ENCODE measurements at regions of chr2 and their contacts with region 1.

Region 1: DNA sequence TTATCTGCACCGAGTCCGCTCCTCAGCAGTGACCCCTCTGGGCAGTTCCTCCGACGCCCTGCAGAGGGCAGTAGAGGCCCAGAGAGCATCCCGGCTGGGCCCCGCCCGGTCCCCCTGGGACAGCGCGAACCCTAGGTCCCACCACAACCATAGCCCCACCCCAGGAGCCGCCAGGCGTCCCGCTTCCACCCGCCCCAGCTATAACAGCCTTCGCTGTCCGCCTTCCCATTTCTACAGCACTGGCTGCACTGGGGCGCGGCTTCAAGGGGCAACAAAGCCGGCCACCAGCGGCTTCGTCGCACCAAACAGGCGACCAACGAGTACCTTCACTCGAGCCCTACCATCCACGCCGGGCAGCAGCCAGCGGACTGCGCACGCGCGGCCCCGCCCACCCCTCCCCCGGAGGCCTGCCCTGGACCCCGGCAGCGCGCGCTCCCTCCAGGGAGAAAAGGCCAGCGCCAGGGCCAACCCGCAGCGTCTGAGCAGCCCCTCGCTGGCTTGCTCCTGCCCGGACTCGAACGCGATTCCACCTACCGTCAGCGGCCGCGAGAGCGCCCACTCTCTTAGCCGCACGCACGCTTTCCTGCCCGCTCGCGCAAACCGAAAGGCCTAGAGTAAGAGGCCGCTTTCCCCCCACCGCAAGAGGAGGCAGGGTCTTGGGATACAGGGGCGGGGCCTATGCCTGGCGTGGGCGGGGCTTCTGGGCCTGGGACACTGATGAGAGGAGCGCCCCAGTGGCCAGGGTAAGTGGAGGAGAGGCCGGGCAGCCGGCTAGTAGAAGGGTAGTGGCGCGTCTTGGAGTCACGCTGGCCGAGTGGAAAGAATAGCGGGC is at the start of gene NHEJ1:
- DNase-seq: peak; percentile 97 to 99 (median 97)
- ATAC-seq: peak; percentile 96
- H3K4me3 ChIP-seq: peak within 1 kb of the TSS; percentile 27 to 64
- H3K27ac ChIP-seq: peak within 1 kb of the TSS; percentile 92 to 97 (median 96)
- H3K4me1 ChIP-seq: peaks cover 14% of the 10 kb centered on the region
- H3K27me3 ChIP-seq: no peaks in the 10 kb centered on the region
- CTCF ChIP-seq: peak; percentile 93 to 99 (median 97)
- POLR2A ChIP-seq: peak; percentile 36 to 71 (median 58)
- total RNA-seq, gene NHEJ1: 8.9 to 9.3 TPM

Region 2: GRCh38 chr2:219278655-219279516 is 118.5 kb after region 1 on chr2 and contains the start of gene DNAJB2:
- intact Hi-C with region 1: no loop called
- DNase-seq: peak; percentile 99
- ATAC-seq: peak; percentile 95
- H3K4me3 ChIP-seq: peak within 1 kb of the TSS; percentile 28 to 35
- H3K27ac ChIP-seq: peak within 1 kb of the TSS; percentile 95 to 99 (median 96)
- H3K4me1 ChIP-seq: peaks cover 41% of the 10 kb centered on the region
- H3K27me3 ChIP-seq: no peaks in the 10 kb centered on the region
- CTCF ChIP-seq: peak in 2 of 7 experiments; percentile 3 to 12
- POLR2A ChIP-seq: peak; percentile 89 to 96 (median 93)
- total RNA-seq, gene DNAJB2: 60.3 to 68.0 TPM

Region 3: GRCh38 chr2:219300022-219300421 is 139.6 kb after region 1 on chr2:
- intact Hi-C with region 1: loop called (anchors 5 kb)
- DNase-seq: no peak
- ATAC-seq: no peak
- H3K4me3 ChIP-seq: no peak overlapping the region
- H3K27ac ChIP-seq: no peak overlapping the region
- H3K4me1 ChIP-seq: peaks cover 9% of the 10 kb centered on the region
- H3K27me3 ChIP-seq: no peaks in the 10 kb centered on the region
- CTCF ChIP-seq: no peak
- POLR2A ChIP-seq: no peak

Region 4: GRCh38 chr2:219378163-219378851 is 217.9 kb after region 1 on chr2:
- intact Hi-C with region 1: loop called (anchors 10 kb)
- DNase-seq: no peak
- ATAC-seq: no peak
- H3K4me3 ChIP-seq: no peak overlapping the region
- H3K27ac ChIP-seq: no peak overlapping the region
- H3K4me1 ChIP-seq: no peaks in the 10 kb centered on the region
- H3K27me3 ChIP-seq: no peaks in the 10 kb centered on the region
- CTCF ChIP-seq: no peak
- POLR2A ChIP-seq: no peak